Activated CD4-positive, alpha-beta T cell treated with anti-CD3 and anti-CD28 coated beads, Interleukin-2, amount 10 ng/mL, durations not matched to agents 24 days and 14 days (primary cell): ENCODE measurements at regions of chr14 and their contacts with region 1.

Region 1: GRCh38 chr14:54730156-54730961 is 163.4 kb downstream of the SAMD4A start:
- DNase-seq: peak; percentile 84
- H3K4me3 Mint-ChIP-seq: peak overlapping the region; percentile 70
- H3K27ac Mint-ChIP-seq: peak overlapping the region; percentile 88
- H3K4me1 Mint-ChIP-seq: peaks cover 40% of the 10 kb centered on the region
- H3K27me3 Mint-ChIP-seq: peaks cover 28% of the 10 kb centered on the region

Region 2: DNA sequence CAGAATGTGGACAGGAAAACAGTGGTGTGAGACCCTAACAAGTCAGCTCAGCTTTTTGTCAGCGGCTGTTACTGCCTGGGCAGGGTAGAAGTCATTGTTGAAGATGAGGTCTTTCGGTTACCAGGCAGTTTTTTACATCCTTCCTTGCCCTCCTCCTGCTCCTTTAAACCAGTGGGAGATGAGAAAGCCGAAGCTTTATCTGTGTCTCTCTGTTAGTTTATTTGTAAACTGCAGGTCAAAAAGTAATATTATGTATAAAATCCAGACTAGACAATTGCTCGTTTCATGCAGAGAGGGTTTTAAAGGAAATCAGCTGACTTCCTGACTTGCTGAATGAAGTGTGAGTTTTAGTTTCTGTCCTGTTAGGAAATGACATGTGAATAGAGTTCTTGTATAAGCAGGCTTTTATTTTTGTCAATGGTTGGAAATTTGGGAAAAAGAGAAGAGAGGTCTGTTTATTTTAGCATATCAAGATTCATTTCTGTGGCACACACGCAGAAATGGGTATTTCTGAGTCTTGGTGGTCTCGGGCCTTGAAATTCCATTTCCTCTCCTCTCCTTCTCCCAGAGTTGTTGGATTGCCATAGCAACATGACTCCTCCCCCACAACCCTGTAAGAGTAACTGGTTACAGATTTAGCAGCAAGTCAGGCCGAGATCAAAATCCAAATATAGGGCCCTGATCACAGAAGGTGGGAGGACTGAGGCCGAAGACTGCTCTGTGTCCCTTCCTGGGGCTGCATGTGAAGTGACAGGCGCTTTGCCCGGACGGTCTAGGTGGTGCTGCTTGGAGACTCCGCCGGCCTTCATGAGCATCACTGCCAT is 102.6 kb before region 1 on chr14:
- intact Hi-C with region 1: loop called (anchors 2 kb)
- DNase-seq: peak; percentile 88
- H3K4me3 Mint-ChIP-seq: peak overlapping the region; percentile 67
- H3K27ac Mint-ChIP-seq: peak overlapping the region; percentile 72
- H3K4me1 Mint-ChIP-seq: peaks cover 37% of the 10 kb centered on the region
- H3K27me3 Mint-ChIP-seq: no peaks in the 10 kb centered on the region

Region 3: GRCh38 chr14:54669721-54670561 is 60.4 kb before region 1 on chr14:
- intact Hi-C with region 1: loop called (anchors 5 kb)
- DNase-seq: peak; percentile 71
- H3K4me3 Mint-ChIP-seq: peak overlapping the region; percentile 6
- H3K27ac Mint-ChIP-seq: peak overlapping the region; percentile 8
- H3K4me1 Mint-ChIP-seq: peaks cover 29% of the 10 kb centered on the region
- H3K27me3 Mint-ChIP-seq: peaks cover 22% of the 10 kb centered on the region

Region 4: GRCh38 chr14:54686219-54686870 is 44.0 kb before region 1 on chr14:
- intact Hi-C with region 1: loop called (anchors 5 kb)
- DNase-seq: no peak
- H3K4me3 Mint-ChIP-seq: no peak overlapping the region
- H3K27ac Mint-ChIP-seq: no peak overlapping the region
- H3K4me1 Mint-ChIP-seq: peaks cover 35% of the 10 kb centered on the region
- H3K27me3 Mint-ChIP-seq: peaks cover 33% of the 10 kb centered on the region

Region 5: DNA sequence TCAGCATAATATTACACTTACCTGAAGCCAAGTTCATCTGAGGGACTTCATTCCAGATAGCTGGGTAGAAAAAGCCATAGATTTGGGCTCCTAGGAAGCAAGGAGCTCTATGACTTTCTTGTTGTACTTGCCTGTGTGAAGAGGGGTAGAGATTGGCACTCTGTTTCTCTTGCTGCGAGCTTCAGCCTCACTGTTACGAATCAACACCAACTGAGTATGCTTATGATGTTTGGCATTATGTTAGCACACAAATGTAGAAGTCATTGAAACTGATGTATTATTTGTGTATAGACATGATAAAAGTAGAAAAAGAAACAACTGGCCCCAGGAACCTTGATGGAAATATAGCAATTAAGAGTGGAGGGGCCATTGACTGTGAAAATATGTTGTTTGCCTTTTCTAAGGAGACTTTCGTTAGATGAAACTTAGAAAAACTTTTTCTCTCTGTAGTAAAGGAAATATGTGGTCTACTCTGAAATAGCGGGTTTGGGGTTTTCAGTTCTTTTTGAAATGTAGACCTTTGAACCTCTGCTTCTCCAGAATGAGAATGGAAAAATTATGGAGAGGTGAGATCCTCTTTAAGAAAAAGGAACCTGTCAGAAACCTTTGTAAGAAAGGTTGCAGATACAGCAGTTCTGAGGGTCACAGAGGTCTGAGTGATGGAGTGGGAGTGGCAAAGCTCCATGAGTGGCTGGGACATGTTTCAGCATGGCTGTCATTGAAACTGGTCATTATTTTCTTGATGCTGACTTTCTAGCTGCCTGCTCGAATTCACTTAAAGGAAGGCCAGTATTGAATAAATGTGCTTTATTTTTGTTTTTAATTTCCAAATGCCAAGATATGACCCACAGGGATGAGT is 12.4 kb after region 1 on chr14:
- intact Hi-C with region 1: loop called (anchors 1 kb)
- DNase-seq: no peak
- H3K4me3 Mint-ChIP-seq: peak overlapping the region; percentile 48
- H3K27ac Mint-ChIP-seq: peak overlapping the region; percentile 71
- H3K4me1 Mint-ChIP-seq: peaks cover 49% of the 10 kb centered on the region
- H3K27me3 Mint-ChIP-seq: peaks cover 8% of the 10 kb centered on the region